ENCODE measurements at regions of chr9 and their contacts with region 1.

Region 1: DNA sequence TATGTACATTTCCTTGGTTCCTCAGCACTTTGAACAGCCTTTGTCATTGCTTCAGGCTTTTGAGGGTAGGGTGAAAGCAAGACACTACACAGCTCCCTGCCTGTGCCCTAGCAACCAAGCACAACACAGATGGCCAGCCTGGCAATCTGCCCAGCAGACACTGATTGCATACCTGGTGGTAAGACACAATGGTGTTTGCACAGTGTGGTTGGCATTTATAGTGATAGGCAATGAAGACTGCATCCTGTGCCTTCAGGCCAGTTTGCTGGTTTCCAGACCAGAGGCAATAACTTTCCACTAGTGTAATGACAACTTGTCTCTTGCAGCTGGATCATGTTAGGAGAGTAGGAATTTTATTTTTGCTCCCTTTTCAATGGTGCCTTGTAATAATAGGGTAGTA is 144.5 kb upstream of the TNC start:
- DNase-seq: peak; percentile 47
- H3K4me3 ChIP-seq: no peak overlapping the region
- H3K27ac ChIP-seq: no peak overlapping the region
- H3K27me3 ChIP-seq: no peaks in the 10 kb centered on the region
- CTCF ChIP-seq: no peak

Region 2: GRCh38 chr9:115152281-115152820 is 110.1 kb before region 1 on chr9:
- CTCF ChIA-PET with region 1: no interaction called
- POLR2A ChIA-PET with region 1: interaction called, 10 read pairs
- DNase-seq: no peak
- H3K4me3 ChIP-seq: no peak overlapping the region
- H3K27ac ChIP-seq: no peak overlapping the region
- H3K27me3 ChIP-seq: no peaks in the 10 kb centered on the region
- CTCF ChIP-seq: no peak

Region 3: DNA sequence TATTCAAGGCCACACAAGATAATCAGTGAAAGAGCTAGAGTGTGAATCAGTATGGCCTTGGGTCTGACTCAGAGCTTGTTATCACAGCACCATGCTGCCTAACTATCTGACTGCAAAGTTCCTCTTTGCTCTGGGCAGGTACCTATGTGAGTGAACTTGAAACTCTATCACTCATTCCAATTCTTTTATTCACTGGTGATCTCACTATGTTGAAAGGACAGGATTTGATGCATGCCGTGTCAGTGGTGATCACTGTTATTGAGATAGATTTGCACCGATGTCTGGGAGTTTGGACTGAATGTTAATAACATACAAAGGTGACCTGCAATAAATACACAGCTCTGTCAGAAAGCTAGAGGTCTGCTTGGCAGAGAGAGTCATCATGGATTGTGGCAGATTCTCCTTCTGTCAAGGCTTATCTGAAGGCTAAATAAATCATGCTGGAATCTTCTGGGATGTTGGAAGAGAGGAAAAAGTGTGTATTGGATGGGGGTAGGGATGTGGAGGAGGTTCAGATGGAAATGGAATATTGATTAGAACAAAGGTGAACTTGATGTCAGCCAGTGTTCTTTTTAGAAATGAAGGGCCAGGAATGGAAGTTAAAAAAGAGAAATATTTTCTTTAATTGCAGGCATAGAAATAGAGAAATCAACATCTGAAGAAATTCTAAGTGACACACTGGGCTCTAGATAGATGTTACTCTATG is 52.7 kb before region 1 on chr9:
- CTCF ChIA-PET with region 1: interaction called, 3 read pairs
- POLR2A ChIA-PET with region 1: interaction called, 10 read pairs
- DNase-seq: no peak
- H3K4me3 ChIP-seq: no peak overlapping the region
- H3K27ac ChIP-seq: no peak overlapping the region
- H3K27me3 ChIP-seq: no peaks in the 10 kb centered on the region
- CTCF ChIP-seq: no peak